ENCODE measurements at regions of chr12 and their contacts with region 1.

Region 1: DNA sequence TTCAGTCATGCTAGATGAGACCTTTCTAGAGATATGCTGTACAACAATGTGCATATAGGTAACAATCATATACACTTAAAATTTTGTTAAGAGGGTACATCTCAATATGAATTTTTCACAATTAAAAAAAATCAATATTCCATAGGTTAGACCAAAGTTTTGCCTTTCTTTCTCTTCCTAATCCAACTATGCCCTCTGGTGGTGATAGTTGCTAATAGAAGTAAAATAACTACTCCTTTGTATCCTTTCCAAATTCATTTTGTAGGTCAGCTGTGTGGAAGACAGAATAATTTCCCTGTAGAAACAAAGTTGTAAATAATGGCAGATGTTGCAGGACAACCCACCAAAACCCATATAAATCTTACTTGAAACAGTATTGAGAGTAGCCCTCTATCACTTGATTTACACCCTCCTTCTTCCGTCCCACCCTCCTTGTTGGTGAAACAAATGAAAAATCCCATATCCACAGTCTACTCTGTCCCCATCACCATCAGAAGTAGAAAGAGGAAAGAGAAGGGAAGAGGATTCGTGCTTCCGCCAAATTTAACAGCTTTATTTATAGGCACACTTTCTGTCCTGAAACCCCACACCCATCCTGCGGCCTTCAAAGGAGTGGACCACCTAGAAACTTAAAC is 34.2 kb upstream of the KICS2 start:
- DNase-seq: peak; percentile 48
- H3K4me3 ChIP-seq: no peak overlapping the region; a peak in 1 of 4 replicates
- H3K27ac ChIP-seq: no peak overlapping the region
- H3K4me1 ChIP-seq: no peaks in the 10 kb centered on the region
- H3K27me3 ChIP-seq: no peaks in the 10 kb centered on the region
- CTCF ChIP-seq: peak; percentile 80
- EP300 ChIP-seq: no peak
- RAD21 ChIP-seq: peak; percentile 94

Region 2: GRCh38 chr12:63826006-63826585 is 430.2 kb before region 1 on chr12:
- CTCF ChIA-PET with region 1: interaction called, 109 read pairs
- POLR2A ChIA-PET with region 1: no interaction called
- DNase-seq: peak; percentile 72
- H3K4me3 ChIP-seq: peak overlapping the region in 1 of 2 experiments; percentile 37; a peak in 1 of 4 replicates
- H3K27ac ChIP-seq: no peak overlapping the region
- H3K4me1 ChIP-seq: no peaks in the 10 kb centered on the region
- H3K27me3 ChIP-seq: no peaks in the 10 kb centered on the region
- CTCF ChIP-seq: peak; percentile 88
- EP300 ChIP-seq: no peak
- RAD21 ChIP-seq: peak; percentile 98

Region 3: DNA sequence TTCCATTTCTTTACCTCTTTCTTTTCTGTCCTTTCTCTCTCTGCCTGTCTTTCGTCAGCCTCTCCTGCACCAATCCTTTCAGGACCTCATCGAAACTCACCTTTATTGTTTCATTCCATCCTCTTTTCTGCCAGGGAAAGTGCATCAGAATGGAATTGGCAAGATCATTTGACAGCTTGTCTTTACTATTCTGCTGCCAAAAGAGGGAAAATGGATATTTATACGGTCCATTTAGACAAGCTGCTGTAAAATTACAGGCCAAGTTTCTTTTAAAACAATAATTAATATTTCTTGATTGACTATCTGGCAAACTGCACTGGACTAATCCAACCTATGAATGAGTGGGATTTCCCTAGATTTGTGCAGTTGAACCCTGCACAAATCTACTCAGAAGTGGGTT is 419.3 kb before region 1 on chr12:
- CTCF ChIA-PET with region 1: interaction called, 109 read pairs
- POLR2A ChIA-PET with region 1: no interaction called
- DNase-seq: no peak
- H3K4me3 ChIP-seq: no peak overlapping the region
- H3K27ac ChIP-seq: no peak overlapping the region
- H3K4me1 ChIP-seq: peaks cover 0 to 2% of the 10 kb centered on the region in 2 experiments; a peak in 1 of 4 replicates
- H3K27me3 ChIP-seq: no peaks in the 10 kb centered on the region
- CTCF ChIP-seq: no peak
- EP300 ChIP-seq: no peak
- RAD21 ChIP-seq: no peak

Region 4: GRCh38 chr12:64181504-64182291 is 74.6 kb before region 1 on chr12:
- CTCF ChIA-PET with region 1: interaction called, 15 read pairs
- POLR2A ChIA-PET with region 1: no interaction called
- DNase-seq: peak; percentile 50
- H3K4me3 ChIP-seq: peak overlapping the region in 1 of 2 experiments; percentile 42; a peak in 3 of 4 replicates
- H3K27ac ChIP-seq: peak overlapping the region; percentile 78 to 98; a peak in 3 of 4 replicates
- H3K4me1 ChIP-seq: peaks cover 5 to 30% of the 10 kb centered on the region in 2 experiments
- H3K27me3 ChIP-seq: no peaks in the 10 kb centered on the region
- CTCF ChIP-seq: peak; percentile 70
- EP300 ChIP-seq: peak in 1 of 2 experiments; percentile 92; a peak in 2 of 4 replicates
- RAD21 ChIP-seq: peak; percentile 93

Region 5: DNA sequence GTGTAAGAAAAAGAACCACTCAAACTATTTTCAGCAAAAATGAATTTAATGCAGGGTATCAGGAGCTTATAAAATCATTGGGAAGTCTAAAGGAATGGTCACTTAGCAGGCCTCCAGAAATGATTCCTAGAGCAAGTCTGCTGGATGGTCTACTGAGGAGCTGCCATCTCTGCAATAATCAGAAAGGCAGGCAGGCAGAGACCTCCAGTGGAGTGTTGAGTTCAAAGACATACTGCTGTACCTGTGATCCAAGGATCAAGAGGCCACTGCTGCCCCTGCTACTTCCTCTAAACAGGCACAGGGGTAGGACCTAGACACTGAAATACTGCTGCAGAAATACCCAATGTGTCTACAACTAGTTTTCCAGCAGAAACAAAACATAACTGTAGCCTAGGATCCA is 19.7 kb before region 1 on chr12:
- CTCF ChIA-PET with region 1: interaction called, 14 read pairs
- POLR2A ChIA-PET with region 1: no interaction called
- DNase-seq: peak; percentile 7
- H3K4me3 ChIP-seq: no peak overlapping the region
- H3K27ac ChIP-seq: no peak overlapping the region
- H3K4me1 ChIP-seq: peaks cover 0 to 5% of the 10 kb centered on the region in 2 experiments; a peak in 2 of 4 replicates
- H3K27me3 ChIP-seq: no peaks in the 10 kb centered on the region
- CTCF ChIP-seq: peak; percentile 39
- EP300 ChIP-seq: no peak
- RAD21 ChIP-seq: peak; percentile 65

Region 6: GRCh38 chr12:64299628-64300027 is 43.3 kb after region 1 on chr12:
- CTCF ChIA-PET with region 1: no interaction called
- POLR2A ChIA-PET with region 1: no interaction called
- DNase-seq: no peak
- H3K4me3 ChIP-seq: no peak overlapping the region
- H3K27ac ChIP-seq: no peak overlapping the region
- H3K4me1 ChIP-seq: no peaks in the 10 kb centered on the region
- H3K27me3 ChIP-seq: no peaks in the 10 kb centered on the region
- CTCF ChIP-seq: no peak
- EP300 ChIP-seq: no peak
- RAD21 ChIP-seq: no peak

Region 7: DNA sequence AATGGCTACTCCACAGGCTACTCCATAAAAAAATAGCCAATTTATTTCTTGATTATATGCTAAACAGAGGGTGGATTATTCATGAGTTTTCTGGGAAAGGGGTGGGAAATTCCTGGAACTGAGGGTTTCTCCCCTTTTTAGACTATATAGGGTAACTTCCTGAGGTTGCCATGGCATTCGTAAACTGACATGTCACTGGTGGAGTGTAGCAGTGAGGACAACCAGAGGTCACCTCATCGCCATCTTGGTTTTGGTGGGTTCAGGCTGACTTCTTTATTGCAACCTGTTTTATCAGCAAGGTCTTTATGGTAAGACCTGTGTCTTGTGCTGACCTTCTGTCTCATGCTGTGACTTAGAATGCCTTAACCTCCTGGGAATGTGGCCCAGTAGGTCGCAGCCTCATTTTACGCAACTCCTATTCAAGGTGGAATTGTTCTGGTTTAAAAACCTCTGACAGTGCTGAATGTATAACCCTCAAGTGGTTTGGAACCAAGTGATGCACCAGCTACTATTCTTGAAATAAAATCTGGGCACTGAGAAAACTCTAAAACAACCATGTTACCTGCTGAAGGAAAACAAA is 106.5 kb after region 1 on chr12:
- CTCF ChIA-PET with region 1: no interaction called
- POLR2A ChIA-PET with region 1: no interaction called
- DNase-seq: no peak
- H3K4me3 ChIP-seq: no peak overlapping the region
- H3K27ac ChIP-seq: no peak overlapping the region
- H3K4me1 ChIP-seq: no peaks in the 10 kb centered on the region
- H3K27me3 ChIP-seq: no peaks in the 10 kb centered on the region
- CTCF ChIP-seq: no peak
- EP300 ChIP-seq: no peak
- RAD21 ChIP-seq: no peak

Region 8: DNA sequence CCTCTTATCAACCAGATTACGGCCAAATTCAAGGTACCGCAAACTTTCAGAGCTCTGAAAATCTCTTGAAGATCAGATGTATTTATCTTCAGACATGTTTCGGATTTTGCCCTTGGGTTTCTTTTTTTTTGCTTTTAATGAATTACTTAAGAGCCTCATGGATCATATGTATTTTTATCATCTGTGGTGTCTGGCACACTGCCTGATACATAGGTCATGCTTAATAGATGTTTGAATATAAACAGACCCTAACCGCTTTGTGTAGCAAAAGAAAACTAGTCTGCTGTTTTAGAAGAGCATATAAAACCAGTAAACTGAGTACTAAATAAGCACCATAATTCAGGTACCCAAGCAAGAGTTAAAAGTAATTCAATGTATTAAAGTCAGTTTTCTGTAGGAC is 175.5 kb after region 1 on chr12:
- CTCF ChIA-PET with region 1: no interaction called
- POLR2A ChIA-PET with region 1: no interaction called
- DNase-seq: no peak
- H3K4me3 ChIP-seq: no peak overlapping the region
- H3K27ac ChIP-seq: no peak overlapping the region
- H3K4me1 ChIP-seq: no peaks in the 10 kb centered on the region
- H3K27me3 ChIP-seq: no peaks in the 10 kb centered on the region
- CTCF ChIP-seq: no peak
- EP300 ChIP-seq: no peak
- RAD21 ChIP-seq: no peak